ENCODE measurements at regions of chr6 and their contacts with region 1.

Region 1: DNA sequence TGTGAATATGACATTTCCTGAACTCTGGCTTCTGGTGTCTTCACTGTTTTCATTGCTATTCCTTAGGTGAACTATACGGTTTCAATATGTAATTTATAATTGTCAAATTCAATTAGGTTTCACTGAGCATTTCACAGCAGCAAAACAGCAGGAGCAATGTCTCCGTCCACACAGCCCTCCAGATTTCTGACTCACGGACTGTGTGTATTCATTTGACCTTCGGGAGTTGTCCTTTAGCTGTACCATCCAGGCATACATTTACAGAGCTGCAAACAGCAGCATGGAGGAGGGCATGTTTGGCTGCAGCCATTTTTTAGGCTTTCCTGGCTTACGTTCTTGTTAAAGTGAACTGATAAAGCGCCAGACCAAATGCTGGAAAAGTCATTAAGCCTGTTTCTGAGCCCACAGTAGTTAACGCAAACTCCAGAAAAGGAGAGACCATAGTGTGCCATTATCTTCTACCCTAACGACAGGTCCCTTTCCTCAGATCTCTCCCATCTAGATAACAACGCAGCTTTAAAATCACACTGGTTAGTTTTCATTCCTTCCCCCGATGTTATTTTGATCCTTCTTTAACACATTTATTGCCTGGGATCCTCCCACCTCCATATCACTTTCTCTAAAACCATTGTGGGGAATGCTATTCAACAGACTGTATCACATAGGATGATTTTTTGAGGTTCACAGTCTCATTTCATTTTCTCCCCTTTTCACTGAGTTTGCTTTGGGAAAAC is 18.3 kb downstream of the FOXC1 start:
- DNase-seq: no peak
- H3K4me3 ChIP-seq: no peak overlapping the region
- H3K27ac ChIP-seq: no peak overlapping the region
- H3K4me1 ChIP-seq: peaks cover 0 to 12% (median 10%) of the 10 kb centered on the region in 4 experiments; a peak in 5 of 7 replicates
- H3K27me3 ChIP-seq: peaks cover 47 to 67% (median 61%) of the 10 kb centered on the region in 4 experiments
- CTCF ChIP-seq: no peak
- EP300 ChIP-seq: no peak
- POLR2A ChIP-seq: no peak
- RAD21 ChIP-seq: no peak

Region 2: DNA sequence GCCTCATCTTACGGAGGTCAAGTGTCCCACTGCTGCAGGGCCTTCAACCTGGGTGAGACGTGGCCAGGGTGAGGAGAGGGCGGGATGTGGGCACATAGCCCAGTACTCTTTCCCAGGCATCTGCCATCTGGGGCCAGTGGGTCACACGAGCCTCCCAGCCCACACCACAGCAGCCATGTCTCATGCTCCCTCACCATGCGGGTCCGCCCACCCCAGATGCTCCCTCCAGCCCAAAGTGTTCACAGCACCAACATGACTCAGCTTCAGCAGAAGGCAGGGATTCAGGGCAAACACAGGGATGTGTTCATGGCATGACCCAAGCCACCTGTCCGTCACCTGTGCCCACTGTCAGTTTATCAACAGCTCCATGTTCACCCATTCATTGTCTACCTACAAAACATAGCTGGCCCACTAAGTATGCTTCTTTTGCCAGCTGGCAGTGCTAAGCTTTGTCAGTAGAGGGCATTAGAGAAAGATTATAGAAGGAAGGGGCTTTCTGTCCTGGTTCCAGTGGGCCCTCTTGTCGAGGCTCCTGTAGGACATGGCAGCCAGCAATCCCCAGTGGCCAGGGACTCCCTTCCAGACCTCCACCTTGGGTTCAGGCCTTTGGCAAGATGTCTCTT is 129.4 kb before region 1 on chr6:
- CTCF ChIA-PET with region 1: no interaction called
- POLR2A ChIA-PET with region 1: no interaction called
- DNase-seq: no peak
- H3K4me3 ChIP-seq: no peak overlapping the region
- H3K27ac ChIP-seq: no peak overlapping the region
- H3K4me1 ChIP-seq: peaks cover 3 to 16% (median 11%) of the 10 kb centered on the region in 4 experiments
- H3K27me3 ChIP-seq: no peaks in the 10 kb centered on the region
- CTCF ChIP-seq: peak in 1 of 3 experiments; percentile 38; a peak in 1 of 4 replicates
- EP300 ChIP-seq: no peak
- POLR2A ChIP-seq: no peak
- RAD21 ChIP-seq: peak; percentile 16 to 30; a peak in 2 of 4 replicates

Region 3: GRCh38 chr6:1554476-1555310 is 73.3 kb before region 1 on chr6:
- CTCF ChIA-PET with region 1: no interaction called
- POLR2A ChIA-PET with region 1: no interaction called
- DNase-seq: no peak
- H3K4me3 ChIP-seq: peak overlapping the region in 1 of 4 experiments; percentile 58; a peak in 3 of 8 replicates
- H3K27ac ChIP-seq: no peak overlapping the region
- H3K4me1 ChIP-seq: peaks cover 0 to 4% (median 2%) of the 10 kb centered on the region in 4 experiments; a peak in 1 of 7 replicates
- H3K27me3 ChIP-seq: no peaks in the 10 kb centered on the region; a peak in 1 of 7 replicates
- CTCF ChIP-seq: peak; percentile 42 to 46 (median 44)
- EP300 ChIP-seq: no peak
- POLR2A ChIP-seq: no peak
- RAD21 ChIP-seq: peak in 1 of 2 experiments; percentile 15; a peak in 1 of 4 replicates

Region 4: DNA sequence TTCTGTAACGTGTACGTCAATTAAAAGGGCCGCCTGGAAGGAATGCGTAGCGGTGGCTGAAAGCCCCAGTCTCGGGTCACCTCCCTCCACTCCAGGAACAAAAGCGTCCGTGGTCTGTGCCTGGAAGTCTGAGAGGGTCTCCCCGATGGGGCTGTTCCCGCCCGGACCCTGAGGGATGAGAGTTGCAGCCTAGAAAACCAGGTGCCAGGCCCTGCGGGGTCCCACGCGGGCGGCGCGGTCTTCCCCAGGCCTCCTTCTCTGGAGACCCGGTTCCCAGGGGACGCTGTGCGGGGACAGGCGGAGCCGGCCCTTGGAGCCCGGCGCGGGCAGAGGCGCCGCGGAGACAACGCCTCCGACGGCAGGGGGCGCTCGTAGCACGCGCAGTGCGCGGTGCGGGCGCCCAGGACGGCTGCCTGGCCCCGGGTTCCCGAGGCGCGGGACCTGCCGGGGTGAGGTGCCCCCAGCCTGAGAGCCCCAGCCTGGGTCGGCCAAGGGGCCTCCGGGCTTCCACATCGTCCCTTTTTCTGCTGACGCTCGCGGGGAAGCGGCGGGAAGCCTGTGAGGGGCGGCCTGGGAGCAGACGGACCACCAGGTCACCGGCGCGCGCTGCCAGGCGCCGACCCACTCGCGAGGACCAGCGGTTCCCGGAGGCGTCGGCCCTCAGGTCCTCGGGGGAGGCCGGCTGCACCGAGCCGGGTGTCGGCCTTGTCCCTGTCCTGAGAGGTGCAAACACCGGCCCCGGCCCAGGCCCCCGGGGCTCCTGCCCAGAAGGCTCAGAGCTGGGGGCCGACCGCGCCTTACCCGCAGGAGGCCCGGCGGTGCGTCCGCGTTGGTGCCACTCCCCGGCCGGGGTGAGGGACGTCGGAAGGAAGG is 23.6 kb before region 1 on chr6:
- CTCF ChIA-PET with region 1: interaction called, 12 read pairs
- POLR2A ChIA-PET with region 1: interaction called, 4 read pairs
- DNase-seq: peak in 1 of 2 experiments; percentile 93
- H3K4me3 ChIP-seq: peak overlapping the region; percentile 8 to 59 (median 42); a peak in 7 of 8 replicates
- H3K27ac ChIP-seq: no peak overlapping the region
- H3K4me1 ChIP-seq: peaks cover 14 to 43% (median 20%) of the 10 kb centered on the region in 4 experiments
- H3K27me3 ChIP-seq: peaks cover 42 to 72% (median 66%) of the 10 kb centered on the region in 4 experiments
- CTCF ChIP-seq: peak in 2 of 3 experiments; percentile 79 to 96; a peak in 3 of 4 replicates
- EP300 ChIP-seq: 0 out of 3 replicates have a peak, but pooled peaks of 1 of the 2 experiments have one; percentile 14
- POLR2A ChIP-seq: no peak
- RAD21 ChIP-seq: peak; percentile 91 to 96

Measured in H1 (cell line).